ENCODE measurements at regions of chr21 and their contacts with region 1.

Region 1: DNA sequence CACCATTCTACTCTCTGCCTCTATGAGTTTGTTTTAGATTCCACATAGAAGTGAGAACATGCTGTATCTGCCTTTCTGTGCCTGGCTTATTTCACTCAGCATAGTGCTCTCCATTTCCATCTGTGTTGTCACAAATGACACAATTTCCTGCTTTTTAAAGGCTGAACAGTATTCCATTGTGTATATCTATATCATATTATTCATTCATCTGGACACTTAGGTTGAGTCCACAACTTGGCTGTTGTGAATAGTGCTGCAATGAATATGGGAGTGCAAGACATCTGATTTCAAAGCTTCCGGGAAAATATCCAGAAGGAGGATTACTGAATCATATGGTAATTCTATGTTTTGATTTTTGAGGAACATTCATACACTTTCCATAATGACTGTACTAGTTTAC is 20.1 kb upstream of the DONSON start:
- DNase-seq: no peak
- ATAC-seq: no peak
- H3K4me3 ChIP-seq: no peak overlapping the region
- H3K4me3 Mint-ChIP-seq: no peak overlapping the region
- H3K27ac ChIP-seq: no peak overlapping the region
- H3K27ac Mint-ChIP-seq: no peak overlapping the region
- H3K4me1 ChIP-seq: no peaks in the 10 kb centered on the region
- H3K4me1 Mint-ChIP-seq: no peaks in the 10 kb centered on the region
- H3K27me3 ChIP-seq: no peaks in the 10 kb centered on the region
- H3K27me3 Mint-ChIP-seq: no peaks in the 10 kb centered on the region
- CTCF ChIP-seq: no peak

Region 2: GRCh38 chr21:32834916-32835235 is 773.7 kb before region 1 on chr21:
- CTCF ChIA-PET with region 1: interaction called, 14 read pairs
- POLR2A ChIA-PET with region 1: interaction called, 5 read pairs
- intact Hi-C with region 1: loop called (anchors 5 kb)
- DNase-seq: no peak
- ATAC-seq: no peak
- H3K4me3 ChIP-seq: no peak overlapping the region
- H3K4me3 Mint-ChIP-seq: no peak overlapping the region
- H3K27ac ChIP-seq: no peak overlapping the region
- H3K27ac Mint-ChIP-seq: no peak overlapping the region
- H3K4me1 ChIP-seq: no peaks in the 10 kb centered on the region
- H3K4me1 Mint-ChIP-seq: no peaks in the 10 kb centered on the region
- H3K27me3 ChIP-seq: peaks cover 0 to 11% (median 4%) of the 10 kb centered on the region in 4 experiments
- H3K27me3 Mint-ChIP-seq: peaks cover 30% of the 10 kb centered on the region
- CTCF ChIP-seq: no peak

Region 3: DNA sequence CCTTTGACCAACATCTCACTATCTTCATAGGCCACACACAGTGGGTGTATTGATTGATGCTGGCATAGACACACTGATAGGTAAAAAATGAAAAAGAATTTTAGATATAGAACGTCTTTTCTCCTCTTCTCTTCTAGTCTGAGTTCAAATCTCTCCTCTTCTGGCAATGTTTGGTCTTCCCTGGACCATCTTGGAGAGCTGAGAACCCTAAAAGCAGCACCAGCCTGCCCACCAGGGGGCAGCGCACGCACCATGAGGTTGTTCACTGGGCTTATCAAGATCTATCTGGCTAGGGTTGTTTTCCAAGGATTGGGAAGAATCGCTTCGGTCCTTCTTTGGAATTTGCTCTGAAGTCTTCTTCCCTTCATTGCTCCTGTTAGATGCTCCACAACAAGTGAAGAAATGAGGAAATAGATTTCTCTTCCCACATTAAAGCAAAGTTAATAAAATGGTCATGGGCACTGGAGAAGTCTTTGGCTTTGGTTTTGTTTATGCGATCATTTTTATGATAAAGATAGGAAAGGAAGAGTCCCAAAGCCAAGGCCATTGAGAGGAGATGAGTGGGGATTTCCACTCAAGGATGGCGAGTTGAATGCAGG is 686.8 kb before region 1 on chr21:
- CTCF ChIA-PET with region 1: interaction called, 10 read pairs
- POLR2A ChIA-PET with region 1: no interaction called
- intact Hi-C with region 1: loop called (anchors 5 kb)
- DNase-seq: peak; percentile 58
- ATAC-seq: no peak
- H3K4me3 ChIP-seq: no peak overlapping the region
- H3K4me3 Mint-ChIP-seq: no peak overlapping the region
- H3K27ac ChIP-seq: no peak overlapping the region
- H3K27ac Mint-ChIP-seq: no peak overlapping the region
- H3K4me1 ChIP-seq: no peaks in the 10 kb centered on the region
- H3K4me1 Mint-ChIP-seq: no peaks in the 10 kb centered on the region
- H3K27me3 ChIP-seq: peaks cover 0 to 5% (median 2%) of the 10 kb centered on the region in 4 experiments
- H3K27me3 Mint-ChIP-seq: peaks cover 32% of the 10 kb centered on the region
- CTCF ChIP-seq: peak; percentile 77

Region 4: DNA sequence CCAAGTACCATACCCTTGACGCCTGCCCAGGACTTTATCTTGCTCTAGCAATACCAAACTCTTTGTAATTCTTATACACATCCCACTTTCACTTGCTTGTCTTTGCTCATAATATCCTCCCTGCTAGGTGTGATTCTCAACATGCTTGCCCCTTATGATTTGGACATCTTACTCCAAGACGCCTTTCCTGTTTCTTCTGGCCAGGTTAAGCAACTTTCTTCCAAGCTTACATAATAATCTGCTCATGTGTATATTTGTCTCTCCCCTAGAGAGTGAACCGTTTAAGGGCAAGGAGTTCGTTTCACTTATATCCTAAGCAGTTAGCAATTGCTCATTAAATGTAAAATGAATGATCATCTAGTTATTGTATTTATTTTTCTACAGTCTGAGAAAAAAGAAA is 11.2 kb after region 1 on chr21:
- CTCF ChIA-PET with region 1: interaction called, 19 read pairs
- POLR2A ChIA-PET with region 1: no interaction called
- intact Hi-C with region 1: no loop called
- DNase-seq: no peak
- ATAC-seq: no peak
- H3K4me3 ChIP-seq: no peak overlapping the region
- H3K4me3 Mint-ChIP-seq: no peak overlapping the region
- H3K27ac ChIP-seq: no peak overlapping the region
- H3K27ac Mint-ChIP-seq: no peak overlapping the region
- H3K4me1 ChIP-seq: no peaks in the 10 kb centered on the region
- H3K4me1 Mint-ChIP-seq: peaks cover 4% of the 10 kb centered on the region
- H3K27me3 ChIP-seq: no peaks in the 10 kb centered on the region
- H3K27me3 Mint-ChIP-seq: no peaks in the 10 kb centered on the region
- CTCF ChIP-seq: no peak

Measured in B cell (primary cell).